Activated B cell treated with CpG ODN at 0.5 μM for 24 hours (primary cell): ENCODE measurements at regions of chr20 and their contacts with region 1.

Region 1: DNA sequence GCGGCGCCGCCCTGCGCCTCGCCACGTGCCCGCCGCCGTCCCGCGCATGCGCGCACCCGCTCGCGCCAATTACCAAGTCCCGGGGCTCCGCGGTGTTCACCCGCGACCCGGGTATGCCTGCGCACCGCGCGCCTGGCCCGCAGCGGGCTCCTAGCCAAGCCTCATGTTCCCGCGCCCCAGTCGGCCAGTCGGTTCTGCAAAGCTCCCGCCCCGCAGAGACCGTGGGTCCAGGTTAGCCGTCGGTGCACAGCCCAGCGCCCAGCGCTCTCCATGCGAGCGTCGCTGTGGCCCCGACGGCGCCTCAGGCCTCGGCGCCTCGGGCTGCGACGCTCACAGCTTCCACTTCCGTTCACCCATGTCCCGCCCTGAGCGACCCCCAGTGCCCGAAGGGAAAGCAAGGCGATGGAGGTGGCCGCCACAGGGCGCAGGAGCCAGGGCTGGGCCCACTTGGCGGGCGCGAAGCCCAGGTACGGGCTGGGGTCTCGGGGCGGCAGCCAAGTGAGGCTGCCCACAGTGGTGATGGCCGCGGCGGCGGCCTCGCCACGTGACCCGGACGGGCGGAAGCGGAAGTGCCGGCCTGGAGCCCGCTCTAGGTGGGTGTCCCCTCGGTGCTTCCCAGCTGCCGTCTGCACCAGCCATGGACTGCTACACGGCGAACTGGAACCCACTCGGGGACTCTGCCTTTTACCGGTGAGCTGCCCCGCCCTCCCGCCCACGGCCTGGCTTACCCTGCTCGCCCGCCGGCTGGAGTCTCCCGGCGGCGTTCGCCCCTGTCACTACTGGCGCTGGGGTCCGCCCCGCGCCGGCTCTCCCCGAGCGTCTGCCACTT is at the starts of genes PCED1A and VPS16:
- DNase-seq: peak; percentile 96
- ATAC-seq: peak; percentile 92
- H3K4me3 Mint-ChIP-seq: peak within 1 kb of the TSS; percentile 86
- H3K27ac Mint-ChIP-seq: peak within 1 kb of the TSS; percentile 82
- H3K4me1 Mint-ChIP-seq: peaks cover 28% of the 10 kb centered on the region
- H3K27me3 Mint-ChIP-seq: no peaks in the 10 kb centered on the region
- CTCF ChIP-seq: no peak
- total RNA-seq, gene PCED1A: 53.2 and 59.1 TPM in 2 replicates
- total RNA-seq, gene VPS16: 54.7 and 56.9 TPM in 2 replicates

Region 2: DNA sequence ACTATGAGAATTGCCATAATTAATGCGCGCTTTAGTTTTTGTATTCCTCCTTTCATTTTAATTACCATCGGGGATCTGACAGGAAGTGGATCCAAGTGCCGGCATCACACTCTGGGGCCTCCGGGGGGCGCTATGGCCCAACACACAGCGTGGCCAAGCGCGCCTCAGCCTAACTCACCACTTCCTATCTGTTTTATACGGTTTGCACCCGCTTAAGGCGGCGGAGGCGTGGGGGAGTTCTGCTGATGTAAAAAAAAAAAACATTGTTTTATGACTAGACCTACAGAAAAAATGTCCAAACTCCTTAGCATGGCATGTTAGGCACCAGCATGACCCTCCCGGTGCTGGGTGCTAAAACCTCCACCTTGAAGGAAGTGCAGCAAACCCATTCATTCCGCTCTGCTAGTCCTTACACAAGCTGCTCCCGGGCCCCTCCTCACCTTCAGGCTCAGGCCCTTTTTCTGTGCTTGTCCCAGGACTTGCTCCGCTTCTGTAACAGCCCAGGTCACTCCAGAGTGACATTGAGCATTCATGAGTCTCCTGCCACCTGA is 152.2 kb before region 1 on chr20:
- CTCF ChIA-PET with region 1: no interaction called
- POLR2A ChIA-PET with region 1: no interaction called
- intact Hi-C with region 1: loop called (anchors 10 kb)
- DNase-seq: no peak
- ATAC-seq: peak; percentile 16
- H3K4me3 Mint-ChIP-seq: no peak overlapping the region
- H3K27ac Mint-ChIP-seq: no peak overlapping the region
- H3K4me1 Mint-ChIP-seq: peaks cover 13% of the 10 kb centered on the region
- H3K27me3 Mint-ChIP-seq: peaks cover 46% of the 10 kb centered on the region
- CTCF ChIP-seq: no peak

Region 3: DNA sequence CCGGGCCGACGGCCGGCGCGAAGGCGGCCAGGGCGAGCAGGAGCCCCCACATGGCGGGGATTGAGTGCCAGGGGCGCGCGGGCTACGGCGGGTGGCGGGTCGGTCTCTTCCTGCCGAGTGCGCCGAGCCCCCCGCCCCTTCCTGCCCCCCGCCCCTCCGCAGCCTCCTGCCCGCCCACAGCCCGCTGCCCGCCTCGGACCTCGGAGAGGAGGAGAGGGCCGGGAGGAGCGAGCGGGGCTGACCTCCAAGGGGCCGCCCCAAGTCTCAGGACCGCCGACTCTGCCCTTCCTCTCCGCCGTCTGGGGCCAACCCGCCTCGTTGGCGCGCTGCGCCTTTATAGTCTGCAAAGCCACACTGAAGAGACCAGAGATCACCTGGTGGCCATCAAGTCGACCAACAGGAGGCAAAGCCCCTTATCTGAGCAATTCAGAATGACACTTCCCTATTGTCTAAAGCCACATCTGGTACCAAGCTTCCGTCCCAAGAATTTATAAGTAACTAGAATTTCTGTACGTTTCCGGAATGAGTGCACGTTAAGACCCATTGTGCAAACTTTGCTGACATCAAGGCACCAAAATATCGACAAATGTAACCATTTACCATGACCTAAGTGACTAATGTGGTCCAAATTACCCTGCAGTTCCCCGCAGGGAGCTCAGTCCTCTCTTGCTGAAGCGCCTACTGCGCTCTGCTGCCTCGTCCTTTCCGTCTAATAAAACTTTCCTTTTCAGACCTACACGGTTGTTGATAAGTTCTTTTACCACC is 39.6 kb before region 1 on chr20 and contains the start of gene CPXM1:
- CTCF ChIA-PET with region 1: no interaction called
- POLR2A ChIA-PET with region 1: interaction called, 7 read pairs
- intact Hi-C with region 1: loop called (anchors 2 kb)
- DNase-seq: no peak
- ATAC-seq: peak; percentile 71
- H3K4me3 Mint-ChIP-seq: peak within 1 kb of the TSS; percentile 85
- H3K27ac Mint-ChIP-seq: peak within 1 kb of the TSS; percentile 77
- H3K4me1 Mint-ChIP-seq: peaks cover 31% of the 10 kb centered on the region
- H3K27me3 Mint-ChIP-seq: peaks cover 48% of the 10 kb centered on the region
- CTCF ChIP-seq: no peak
- total RNA-seq, gene CPXM1: 8.5 and 9.8 TPM in 2 replicates